ENCODE measurements at regions of chr13 and their contacts with region 1.

Region 1: GRCh38 chr13:46831588-46832194 is 34.7 kb upstream of the ESD start:
- DNase-seq: peak; percentile 48
- H3K4me3 ChIP-seq: no peak overlapping the region
- H3K27ac ChIP-seq: no peak overlapping the region
- H3K4me1 ChIP-seq: no peaks in the 10 kb centered on the region
- H3K27me3 ChIP-seq: no peaks in the 10 kb centered on the region
- CTCF ChIP-seq: peak; percentile 68

Region 2: DNA sequence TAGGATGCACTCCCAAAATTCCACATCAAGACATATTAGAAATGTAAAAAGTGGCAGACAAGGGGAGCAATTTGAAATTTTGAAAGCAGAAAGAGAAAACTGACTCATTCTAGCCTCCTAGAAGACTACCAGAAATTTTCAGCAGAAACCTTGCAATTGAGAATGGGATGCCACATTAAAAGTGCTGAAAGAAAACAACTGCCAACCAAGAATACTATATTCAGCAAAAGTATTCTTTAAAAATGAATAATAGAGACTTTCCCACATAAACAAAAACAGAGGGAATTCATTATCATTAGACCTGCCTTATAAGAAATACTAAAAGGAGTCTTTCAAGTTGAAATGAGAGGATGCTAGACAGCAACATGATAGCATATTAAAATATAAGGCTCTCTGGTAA is 143.5 kb after region 1 on chr13:
- intact Hi-C with region 1: loop called (anchors 10 kb)
- DNase-seq: no peak
- H3K4me3 ChIP-seq: no peak overlapping the region
- H3K27ac ChIP-seq: no peak overlapping the region
- H3K4me1 ChIP-seq: no peaks in the 10 kb centered on the region
- H3K27me3 ChIP-seq: no peaks in the 10 kb centered on the region
- CTCF ChIP-seq: no peak

Region 3: DNA sequence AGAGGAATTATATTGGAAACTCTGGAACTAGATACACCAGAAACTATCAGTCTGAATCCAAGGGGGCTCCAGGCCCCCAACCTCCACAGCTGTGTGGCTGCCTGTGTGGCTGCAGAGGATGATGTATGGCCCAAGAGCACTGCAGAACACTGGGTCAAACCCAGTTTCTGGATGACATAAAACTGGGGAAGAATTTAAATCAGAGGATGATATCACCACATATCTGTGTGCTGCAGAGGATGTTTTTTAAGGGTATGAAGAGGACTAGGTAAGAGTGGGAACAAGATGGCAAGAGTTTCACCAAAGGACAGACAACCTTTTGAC is 942.9 kb after region 1 on chr13:
- intact Hi-C with region 1: loop called (anchors 5 kb)
- DNase-seq: no peak
- H3K4me3 ChIP-seq: no peak overlapping the region
- H3K27ac ChIP-seq: no peak overlapping the region
- H3K4me1 ChIP-seq: no peaks in the 10 kb centered on the region
- H3K27me3 ChIP-seq: no peaks in the 10 kb centered on the region
- CTCF ChIP-seq: no peak